OCI-LY7 (cell line): ENCODE measurements at regions of chr2 and their contacts with region 1.

Region 1: GRCh38 chr2:49261781-49262180 is 107.5 kb upstream of the FSHR start:
- DNase-seq: no peak
- H3K4me3 ChIP-seq: no peak overlapping the region
- H3K27ac ChIP-seq: no peak overlapping the region
- H3K4me1 ChIP-seq: no peaks in the 10 kb centered on the region
- CTCF ChIP-seq: no peak

Region 2: GRCh38 chr2:49248506-49248905 is 13.3 kb before region 1 on chr2:
- CTCF ChIA-PET with region 1: no interaction called
- POLR2A ChIA-PET with region 1: no interaction called
- intact Hi-C with region 1: no loop called
- DNase-seq: no peak
- H3K4me3 ChIP-seq: no peak overlapping the region
- H3K27ac ChIP-seq: no peak overlapping the region
- H3K4me1 ChIP-seq: no peaks in the 10 kb centered on the region
- CTCF ChIP-seq: no peak

Region 3: GRCh38 chr2:49490710-49491109 is 228.9 kb after region 1 on chr2:
- CTCF ChIA-PET with region 1: no interaction called
- POLR2A ChIA-PET with region 1: no interaction called
- intact Hi-C with region 1: loop called (anchors 10 kb)
- DNase-seq: peak; percentile 29
- H3K4me3 ChIP-seq: no peak overlapping the region
- H3K27ac ChIP-seq: no peak overlapping the region
- H3K4me1 ChIP-seq: no peaks in the 10 kb centered on the region
- CTCF ChIP-seq: peak; percentile 70

Region 4: DNA sequence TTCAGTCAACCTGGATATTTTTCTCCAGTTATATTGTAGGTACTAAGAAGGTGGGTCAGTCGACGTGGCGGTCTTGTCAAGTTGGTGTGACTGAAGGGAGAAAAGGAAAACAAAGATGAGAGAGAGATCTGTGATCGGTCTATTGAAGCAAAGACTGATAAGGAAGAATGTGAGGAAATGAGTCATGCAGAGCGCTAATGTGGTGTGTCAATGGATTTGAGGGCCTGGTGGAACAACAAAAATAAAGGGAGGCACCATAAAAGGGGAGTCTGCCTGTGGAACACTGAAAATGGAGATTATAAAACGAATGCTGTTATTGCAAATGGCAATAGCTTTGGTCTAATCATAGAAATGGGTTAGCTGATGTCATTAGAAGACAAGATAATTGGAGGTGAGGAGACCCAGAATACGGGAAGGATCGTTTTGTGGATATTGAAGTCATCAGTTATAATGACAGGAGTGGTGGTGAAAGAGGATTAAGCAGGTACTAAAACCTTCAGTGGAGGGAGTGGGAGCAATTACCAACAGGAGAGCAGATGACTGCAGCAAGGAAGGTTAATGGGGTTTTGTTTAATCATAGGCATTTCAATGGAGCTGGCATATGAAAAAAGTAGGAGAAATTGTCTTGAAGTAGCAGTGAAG is 491.7 kb after region 1 on chr2:
- CTCF ChIA-PET with region 1: no interaction called
- POLR2A ChIA-PET with region 1: no interaction called
- intact Hi-C with region 1: no loop called
- DNase-seq: no peak
- H3K4me3 ChIP-seq: no peak overlapping the region
- H3K27ac ChIP-seq: no peak overlapping the region
- H3K4me1 ChIP-seq: no peaks in the 10 kb centered on the region
- CTCF ChIP-seq: no peak